HEK293 (cell line): ENCODE measurements at regions of chr18 and their contacts with region 1.

Region 1: GRCh38 chr18:24514439-24514838 is 54.0 kb downstream of the HRH4 start:
- H3K4me3 ChIP-seq: no peak overlapping the region
- H3K27ac ChIP-seq: no peak overlapping the region
- H3K4me1 ChIP-seq: no peaks in the 10 kb centered on the region
- CTCF ChIP-seq: no peak

Region 2: DNA sequence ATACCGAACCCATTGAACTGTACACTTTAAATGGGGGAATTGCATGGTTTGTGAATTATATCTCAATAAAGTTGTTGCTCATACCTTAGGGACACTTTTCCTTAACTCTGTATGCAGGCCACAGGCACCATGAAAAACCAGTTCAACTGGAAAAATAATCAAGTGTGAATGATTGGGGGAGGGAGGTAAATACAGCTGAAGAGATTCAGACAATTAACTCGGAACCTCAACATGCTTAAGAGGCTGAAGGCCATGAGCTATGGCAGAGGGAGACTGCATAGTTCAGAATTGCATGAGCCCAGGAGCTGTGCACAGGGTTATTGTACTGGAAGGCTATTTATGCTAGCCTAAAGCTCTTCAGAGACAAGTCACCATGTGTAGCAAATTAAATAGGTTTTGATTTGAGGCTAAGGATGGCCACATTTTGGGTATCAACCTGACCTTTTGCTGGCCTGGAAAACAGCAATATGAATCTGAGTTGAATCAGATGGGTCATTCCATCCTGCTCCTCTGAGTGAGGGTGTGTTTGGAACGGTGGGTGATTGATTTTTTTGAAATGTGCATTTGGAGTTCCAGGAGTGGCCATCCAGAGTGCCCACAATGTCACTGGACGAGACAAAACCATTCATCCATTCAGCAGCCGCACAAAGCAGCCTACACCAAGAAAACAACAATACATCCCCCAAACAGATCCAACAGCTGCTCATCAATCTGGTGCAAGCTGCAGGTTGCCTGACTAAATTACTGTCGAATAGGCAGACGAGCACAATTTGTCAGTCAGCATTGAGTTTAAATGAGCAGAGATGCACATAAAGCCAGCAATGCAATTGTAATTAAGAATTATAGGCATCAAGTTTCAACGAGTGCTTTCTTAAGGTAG is 11.6 kb before region 1 on chr18:
- CTCF ChIA-PET with region 1: interaction called, 19 read pairs
- POLR2A ChIA-PET with region 1: no interaction called
- H3K4me3 ChIP-seq: no peak overlapping the region
- H3K27ac ChIP-seq: no peak overlapping the region
- H3K4me1 ChIP-seq: no peaks in the 10 kb centered on the region
- CTCF ChIP-seq: no peak

Region 3: DNA sequence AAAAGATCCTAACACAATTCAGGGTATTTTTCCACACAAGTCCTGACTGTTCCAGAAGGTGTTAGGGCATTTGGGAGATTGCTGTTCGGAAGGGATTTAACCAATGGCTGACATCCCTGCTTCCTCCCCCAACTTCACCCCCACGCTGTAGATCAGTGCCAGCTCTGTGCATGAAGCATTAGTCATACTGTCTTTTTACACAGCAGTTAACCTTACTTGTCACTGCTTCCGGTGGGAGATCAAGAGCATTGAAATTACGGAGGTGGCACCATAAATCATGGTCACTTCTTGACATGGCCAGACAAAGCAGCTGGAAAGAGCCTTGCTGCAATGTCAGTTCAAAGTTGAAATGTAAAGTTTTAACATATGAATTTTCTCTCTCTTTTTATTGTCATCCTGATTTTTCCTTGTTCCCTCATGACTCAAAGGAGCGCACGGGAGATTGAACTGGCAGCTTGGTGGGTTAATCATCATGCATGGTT is 16.2 kb after region 1 on chr18:
- CTCF ChIA-PET with region 1: interaction called, 19 read pairs
- POLR2A ChIA-PET with region 1: no interaction called
- H3K4me3 ChIP-seq: no peak overlapping the region
- H3K27ac ChIP-seq: no peak overlapping the region
- H3K4me1 ChIP-seq: peaks cover 6% of the 10 kb centered on the region
- CTCF ChIP-seq: no peak